Ovary (tissue), 10 donors: ENCODE measurements at regions of chr22 and their contacts with region 1.

Region 1: DNA sequence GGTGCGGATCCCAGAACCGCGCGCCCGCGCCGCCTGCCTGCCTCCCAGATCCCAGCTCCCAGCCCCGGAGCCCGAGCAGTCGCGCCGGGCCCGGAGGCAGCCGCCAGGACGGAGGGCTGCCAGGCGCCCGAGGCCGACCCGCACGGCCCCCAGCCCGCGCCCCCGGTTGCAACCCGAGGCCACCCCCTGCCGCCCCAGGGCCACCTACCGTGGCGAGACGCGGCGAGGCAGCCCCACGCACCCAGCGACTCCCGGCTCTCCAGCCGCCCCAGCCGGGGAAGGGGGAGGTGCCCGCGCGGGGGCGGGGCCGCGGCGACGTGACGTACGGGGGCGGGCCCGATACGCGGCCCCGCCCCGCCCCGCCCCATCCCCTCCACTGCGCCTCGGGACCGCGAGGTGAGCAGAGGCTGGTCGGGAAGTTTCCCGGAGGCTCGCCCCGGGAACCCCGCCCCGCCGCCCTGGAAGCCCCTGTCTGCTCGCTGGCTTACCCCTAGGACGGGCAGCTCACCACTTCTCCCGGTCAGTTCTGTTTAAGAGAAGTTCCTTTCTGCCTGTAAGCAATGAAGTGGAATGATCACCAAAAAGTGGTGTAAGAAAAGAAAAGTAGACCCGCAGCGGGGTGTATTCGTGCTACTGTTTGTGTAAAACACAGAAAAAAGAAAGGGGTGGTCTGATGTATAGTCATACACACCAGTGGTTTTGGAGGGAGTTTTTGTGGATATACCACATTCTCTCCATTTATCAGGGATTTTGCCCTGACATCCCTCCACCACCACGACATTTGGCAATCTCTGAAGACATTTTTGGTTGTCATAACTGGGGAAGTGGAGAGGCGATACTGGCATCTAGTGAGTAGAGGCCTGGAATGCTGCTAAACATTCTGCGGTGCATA is at the start of gene TPST2:
- DNase-seq: peak; percentile 76 to 88 (median 82)
- H3K4me3 ChIP-seq: peak within 1 kb of the TSS; percentile 93
- H3K27ac ChIP-seq: peak within 1 kb of the TSS; percentile 16 to 58
- H3K4me1 ChIP-seq: peaks cover 2% of the 10 kb centered on the region
- H3K27me3 ChIP-seq: no peaks in the 10 kb centered on the region
- CTCF ChIP-seq: no peak
- EP300 ChIP-seq: no peak
- POLR2A ChIP-seq: peak; percentile 70
- total RNA-seq, gene TPST2: 10.5 to 28.5 (median 15.5) TPM

Region 2: DNA sequence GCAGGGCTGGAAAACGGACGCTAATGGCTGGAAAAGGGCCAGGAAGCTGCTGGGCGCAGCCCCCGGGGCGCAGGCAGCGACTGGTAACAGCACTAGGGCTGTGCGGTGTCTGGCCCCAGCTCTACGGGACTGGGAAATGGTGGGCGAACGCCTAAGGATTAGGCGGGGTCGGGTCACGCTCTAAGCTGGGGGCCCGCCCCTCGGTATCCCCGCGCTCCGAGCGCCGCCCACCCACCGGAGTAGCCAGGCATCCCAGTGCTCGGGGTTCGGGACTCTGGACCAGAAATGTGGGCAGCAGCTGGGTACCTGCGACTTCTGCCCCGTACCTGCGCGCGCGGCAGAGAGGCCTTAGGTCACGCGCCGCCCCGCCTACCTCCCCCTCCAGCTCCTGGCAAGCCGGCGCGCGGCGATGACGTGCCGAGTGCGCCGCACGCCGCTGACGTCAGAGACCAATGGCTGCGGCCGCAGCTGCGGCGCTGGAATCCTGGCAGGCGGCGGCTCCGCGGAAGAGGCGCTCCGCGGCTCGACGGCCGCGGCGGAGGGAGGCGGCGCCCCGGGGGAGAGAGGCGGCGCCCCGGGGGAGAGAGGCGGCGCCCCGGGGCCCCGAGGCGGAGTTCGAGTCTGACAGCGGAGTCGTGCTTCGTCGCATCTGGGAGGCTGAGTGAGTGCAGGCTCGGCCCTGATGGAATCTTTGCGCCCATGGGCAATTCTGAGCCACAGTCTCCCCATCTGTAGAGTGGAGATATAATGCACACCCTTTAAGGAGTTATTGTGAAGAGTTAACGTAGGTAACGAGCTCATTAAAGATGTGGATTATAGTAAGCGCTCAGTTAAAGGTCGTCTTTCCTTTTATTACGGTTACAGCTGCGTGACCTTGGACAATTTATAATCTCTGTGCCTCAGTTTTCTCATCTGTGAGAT is 106.4 kb before region 1 on chr22 and contains the starts of genes HPS4 and SRRD:
- intact Hi-C with region 1: loop called in 1 of 4 experiments (anchors 10 kb)
- DNase-seq: peak; percentile 82 to 93 (median 89)
- H3K4me3 ChIP-seq: peak within 1 kb of the TSS; percentile 81
- H3K27ac ChIP-seq: peak within 1 kb of the TSS; percentile 84 to 92
- H3K4me1 ChIP-seq: peaks cover 14% of the 10 kb centered on the region
- H3K27me3 ChIP-seq: no peaks in the 10 kb centered on the region
- CTCF ChIP-seq: no peak
- EP300 ChIP-seq: peak; percentile 11
- POLR2A ChIP-seq: peak; percentile 85
- total RNA-seq, gene HPS4: 24.1 to 37.8 (median 34.0) TPM
- total RNA-seq, gene SRRD: 7.3 to 25.2 (median 18.4) TPM